Endothelial cell of umbilical vein (primary cell): ENCODE measurements at regions of chr7 and their contacts with region 1.

Region 1: GRCh38 chr7:139058943-139059342 is 23.1 kb upstream of the ZC3HAV1L start:
- DNase-seq: peak; percentile 81
- H3K4me3 ChIP-seq: no peak overlapping the region
- H3K27ac ChIP-seq: peak overlapping the region; percentile 67
- H3K4me1 ChIP-seq: peaks cover 23% of the 10 kb centered on the region
- H3K27me3 ChIP-seq: no peaks in the 10 kb centered on the region
- CTCF ChIP-seq: no peak
- POLR2A ChIP-seq: no peak

Region 2: GRCh38 chr7:138875794-138876193 is 183.1 kb before region 1 on chr7:
- CTCF ChIA-PET with region 1: no interaction called
- POLR2A ChIA-PET with region 1: no interaction called
- dilution Hi-C with region 1: no loop called
- intact Hi-C with region 1: no loop called
- DNase-seq: no peak
- H3K4me3 ChIP-seq: no peak overlapping the region
- H3K27ac ChIP-seq: no peak overlapping the region
- H3K4me1 ChIP-seq: no peaks in the 10 kb centered on the region
- H3K27me3 ChIP-seq: no peaks in the 10 kb centered on the region
- CTCF ChIP-seq: no peak
- POLR2A ChIP-seq: no peak

Region 3: DNA sequence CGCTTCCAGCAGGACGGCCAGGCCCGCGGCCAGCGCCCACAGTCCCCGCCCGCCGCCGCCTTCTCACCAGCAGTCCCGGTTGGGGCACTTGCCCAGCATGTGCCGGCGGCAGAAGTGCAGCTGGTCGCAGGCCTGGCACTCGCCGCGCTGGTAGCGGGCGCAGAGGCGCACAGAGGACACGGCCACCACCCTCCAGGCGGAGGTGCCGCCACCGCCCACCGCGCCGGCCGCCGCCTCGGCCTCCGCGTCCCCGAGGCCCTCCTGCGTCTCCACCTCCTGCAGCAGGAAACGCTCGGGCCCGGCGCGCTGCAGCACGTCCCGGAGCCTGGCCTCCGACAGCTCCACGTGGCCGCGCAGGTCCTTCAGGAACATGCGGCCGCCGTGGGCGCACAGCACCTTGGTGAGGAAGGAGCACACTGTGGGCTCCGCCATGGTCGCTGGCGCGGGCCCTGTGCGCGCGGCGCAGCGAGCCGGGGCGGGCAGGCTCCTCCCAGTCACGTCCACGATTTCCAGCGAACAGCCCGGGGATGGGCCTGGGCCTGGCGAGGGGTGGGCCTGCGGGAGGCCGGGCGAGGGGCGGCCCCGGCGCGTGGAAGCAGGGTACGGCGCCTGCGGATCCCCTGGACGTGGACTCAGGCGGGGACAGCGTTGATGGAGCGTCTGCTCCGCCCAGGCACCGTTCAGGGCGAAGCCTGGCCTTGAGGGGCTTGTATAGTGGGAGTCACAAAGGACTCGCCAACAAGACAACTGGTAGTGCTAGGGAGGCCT is 23.2 kb before region 1 on chr7 and contains the start of gene ZC3HAV1L:
- CTCF ChIA-PET with region 1: no interaction called
- POLR2A ChIA-PET with region 1: no interaction called
- dilution Hi-C with region 1: no loop called
- intact Hi-C with region 1: loop called (anchors 2 kb)
- DNase-seq: peak; percentile 84
- H3K4me3 ChIP-seq: peak within 1 kb of the TSS; percentile 35 to 85 (median 63)
- H3K27ac ChIP-seq: peak within 1 kb of the TSS; percentile 20
- H3K4me1 ChIP-seq: peaks cover 10% of the 10 kb centered on the region
- H3K27me3 ChIP-seq: no peaks in the 10 kb centered on the region
- CTCF ChIP-seq: no peak
- POLR2A ChIP-seq: peak; percentile 92
- total RNA-seq, gene ZC3HAV1L: 23.8 and 25.7 TPM in 2 replicates

Region 4: GRCh38 chr7:139109188-139109982 is 50.4 kb after region 1 on chr7 and contains the start of gene ZC3HAV1:
- CTCF ChIA-PET with region 1: no interaction called
- POLR2A ChIA-PET with region 1: no interaction called
- dilution Hi-C with region 1: no loop called
- intact Hi-C with region 1: no loop called
- DNase-seq: peak; percentile 79
- H3K4me3 ChIP-seq: peak within 1 kb of the TSS; percentile 69 to 87 (median 71)
- H3K27ac ChIP-seq: peak within 1 kb of the TSS; percentile 64
- H3K4me1 ChIP-seq: peaks cover 13% of the 10 kb centered on the region
- H3K27me3 ChIP-seq: no peaks in the 10 kb centered on the region
- CTCF ChIP-seq: no peak
- POLR2A ChIP-seq: peak; percentile 92
- total RNA-seq, gene ZC3HAV1: 36.8 and 37.7 TPM in 2 replicates